ENCODE measurements at regions of chr11 and their contacts with region 1.

Region 1: DNA sequence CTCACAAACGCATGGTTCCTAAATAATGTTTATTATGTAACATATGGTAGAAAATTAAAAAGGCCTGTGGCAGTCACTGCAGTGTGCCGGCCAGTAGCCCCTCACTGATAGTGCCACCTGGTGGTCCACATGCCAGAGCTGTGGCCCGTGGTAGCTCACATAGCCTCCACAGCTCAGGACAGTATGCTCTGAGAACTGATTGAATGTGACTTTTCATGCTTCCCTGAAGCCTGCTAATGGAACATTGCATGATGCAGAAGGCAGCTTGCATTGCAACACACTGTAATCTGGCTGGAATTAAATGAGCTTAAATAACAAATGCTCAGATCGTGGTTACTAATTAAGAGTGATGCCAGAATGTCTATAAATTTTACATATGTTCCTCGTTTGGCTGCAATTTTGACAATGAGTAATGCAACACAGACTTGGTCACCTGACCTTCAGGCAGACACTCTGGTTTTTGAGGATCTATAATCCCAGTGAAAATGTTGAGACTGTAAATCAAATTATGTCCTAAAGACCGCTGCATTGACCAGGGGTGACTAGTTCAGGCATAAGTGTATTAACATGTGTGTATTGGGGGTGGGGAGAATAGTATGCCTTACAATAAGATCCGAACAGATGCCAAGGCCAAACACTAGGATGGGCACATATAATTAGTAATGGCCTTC is 566.4 kb downstream of the METTL15 start:
- DNase-seq: no peak
- ATAC-seq: peak in 1 of 8 donors; percentile 45
- H3K4me3 ChIP-seq: no peak overlapping the region
- H3K27ac ChIP-seq: no peak overlapping the region
- H3K4me1 ChIP-seq: peaks cover 0 to under 1% (median 0%) of the 10 kb centered on the region in 9 donors
- H3K27me3 ChIP-seq: no peaks in the 10 kb centered on the region
- CTCF ChIP-seq: peak in 7 of 9 donors; percentile 12 to 43 (median 32)

Region 2: GRCh38 chr11:27153136-27153535 is 1521.4 kb before region 1 on chr11:
- intact Hi-C with region 1: loop called in 1 of 10 experiments (anchors 5 kb)
- DNase-seq: no peak
- ATAC-seq: no peak
- H3K4me3 ChIP-seq: no peak overlapping the region
- H3K27ac ChIP-seq: no peak overlapping the region
- H3K4me1 ChIP-seq: no peaks in the 10 kb centered on the region
- H3K27me3 ChIP-seq: no peaks in the 10 kb centered on the region
- CTCF ChIP-seq: no peak

Region 3: GRCh38 chr11:28756977-28757376 is 82.4 kb after region 1 on chr11:
- intact Hi-C with region 1: no loop called
- DNase-seq: no peak
- ATAC-seq: peak in 1 of 8 donors; percentile 15
- H3K4me3 ChIP-seq: no peak overlapping the region
- H3K27ac ChIP-seq: no peak overlapping the region
- H3K4me1 ChIP-seq: no peaks in the 10 kb centered on the region
- H3K27me3 ChIP-seq: no peaks in the 10 kb centered on the region
- CTCF ChIP-seq: no peak

Measured in heart right ventricle (tissue), 16 donors.